ENCODE measurements at regions of chr1 and their contacts with region 1.

Region 1: GRCh38 chr1:67174716-67175284 is 8.5 kb downstream of the IL23R start:
- DNase-seq: no peak
- ATAC-seq: no peak
- H3K4me3 ChIP-seq: no peak overlapping the region
- H3K4me3 Mint-ChIP-seq: peak overlapping the region in 1 of 10 donors; percentile 15
- H3K27ac ChIP-seq: no peak overlapping the region
- H3K27ac Mint-ChIP-seq: peak overlapping the region in 1 of 9 donors; percentile 60
- H3K4me1 ChIP-seq: peaks cover 29 to 32% of the 10 kb centered on the region in 2 donors
- H3K4me1 Mint-ChIP-seq: peaks cover 43 to 66% (median 53%) of the 10 kb centered on the region in 7 donors
- H3K27me3 ChIP-seq: no peaks in the 10 kb centered on the region
- H3K27me3 Mint-ChIP-seq: peaks cover 0 to 4% (median 0%) of the 10 kb centered on the region in 5 donors

Region 2: GRCh38 chr1:66929999-66930822 is 244.6 kb before region 1 on chr1:
- CTCF ChIA-PET with region 1: no interaction called
- POLR2A ChIA-PET with region 1: interaction called, 4 read pairs
- intact Hi-C with region 1: loop called in 1 of 2 experiments (anchors 2 kb)
- DNase-seq: peak; percentile 88 to 97 (median 92)
- ATAC-seq: peak; percentile 88
- H3K4me3 ChIP-seq: peak overlapping the region; percentile 69
- H3K4me3 Mint-ChIP-seq: peak overlapping the region; percentile 85 to 98 (median 92)
- H3K27ac ChIP-seq: peak overlapping the region; percentile 91
- H3K27ac Mint-ChIP-seq: peak overlapping the region; percentile 79 to 95 (median 90)
- H3K4me1 ChIP-seq: peaks cover 45 to 48% of the 10 kb centered on the region in 2 donors
- H3K4me1 Mint-ChIP-seq: peaks cover 38 to 88% (median 70%) of the 10 kb centered on the region in 7 donors
- H3K27me3 ChIP-seq: no peaks in the 10 kb centered on the region
- H3K27me3 Mint-ChIP-seq: no peaks in the 10 kb centered on the region

Region 3: DNA sequence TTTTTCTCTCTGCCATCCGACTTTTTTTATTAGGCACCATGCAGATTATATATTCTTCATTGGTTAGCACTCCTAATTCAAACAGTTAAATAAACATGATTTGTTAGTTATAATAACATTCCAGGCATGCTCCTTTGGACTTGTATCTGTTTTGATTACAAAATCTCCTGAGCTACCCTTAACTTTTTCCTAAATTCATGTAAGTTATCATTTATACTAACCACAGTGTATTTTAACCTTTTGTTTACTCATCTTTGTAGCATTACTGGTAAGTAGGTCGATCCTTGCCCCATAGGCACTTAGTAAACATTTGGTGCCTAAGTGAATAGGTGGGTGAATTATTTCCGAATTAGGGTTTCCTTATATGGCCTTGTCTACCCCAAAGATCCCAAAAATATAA is 206.2 kb before region 1 on chr1:
- CTCF ChIA-PET with region 1: no interaction called
- POLR2A ChIA-PET with region 1: interaction called, 10 read pairs
- intact Hi-C with region 1: no loop called
- DNase-seq: no peak
- ATAC-seq: no peak
- H3K4me3 ChIP-seq: no peak overlapping the region
- H3K4me3 Mint-ChIP-seq: no peak overlapping the region
- H3K27ac ChIP-seq: no peak overlapping the region
- H3K27ac Mint-ChIP-seq: peak overlapping the region in 7 of 9 donors; percentile 10 to 91 (median 59)
- H3K4me1 ChIP-seq: no peaks in the 10 kb centered on the region
- H3K4me1 Mint-ChIP-seq: peaks cover 12 to 44% (median 31%) of the 10 kb centered on the region in 7 donors
- H3K27me3 ChIP-seq: no peaks in the 10 kb centered on the region
- H3K27me3 Mint-ChIP-seq: no peaks in the 10 kb centered on the region

Region 4: GRCh38 chr1:67162957-67163356 is 11.8 kb before region 1 on chr1:
- CTCF ChIA-PET with region 1: no interaction called
- POLR2A ChIA-PET with region 1: no interaction called
- intact Hi-C with region 1: loop called in 1 of 2 experiments (anchors 1 kb)
- DNase-seq: peak in 1 of 9 donors; percentile 43
- ATAC-seq: no peak
- H3K4me3 ChIP-seq: no peak overlapping the region
- H3K4me3 Mint-ChIP-seq: peak overlapping the region in 1 of 10 donors; percentile 45
- H3K27ac ChIP-seq: no peak overlapping the region
- H3K27ac Mint-ChIP-seq: peak overlapping the region in 1 of 9 donors; percentile 83
- H3K4me1 ChIP-seq: no peaks in the 10 kb centered on the region
- H3K4me1 Mint-ChIP-seq: peaks cover 7 to 46% (median 10%) of the 10 kb centered on the region in 7 donors
- H3K27me3 ChIP-seq: no peaks in the 10 kb centered on the region
- H3K27me3 Mint-ChIP-seq: peaks cover 0 to 17% (median 5%) of the 10 kb centered on the region in 5 donors

Region 5: GRCh38 chr1:67194209-67194863 is 19.5 kb after region 1 on chr1:
- CTCF ChIA-PET with region 1: no interaction called
- POLR2A ChIA-PET with region 1: interaction called, 3 read pairs
- intact Hi-C with region 1: loop called (anchors 1 to 2 kb)
- DNase-seq: peak in 4 of 9 donors; percentile 19 to 49 (median 31)
- ATAC-seq: peak; percentile 73
- H3K4me3 ChIP-seq: no peak overlapping the region
- H3K4me3 Mint-ChIP-seq: peak overlapping the region in 2 of 10 donors; percentile 15 to 17
- H3K27ac ChIP-seq: no peak overlapping the region
- H3K27ac Mint-ChIP-seq: peak overlapping the region in 1 of 9 donors; percentile 75
- H3K4me1 ChIP-seq: peaks cover 4 to 20% of the 10 kb centered on the region in 2 donors
- H3K4me1 Mint-ChIP-seq: peaks cover 4 to 30% (median 12%) of the 10 kb centered on the region in 7 donors
- H3K27me3 ChIP-seq: no peaks in the 10 kb centered on the region
- H3K27me3 Mint-ChIP-seq: peaks cover 0 to 3% (median 0%) of the 10 kb centered on the region in 5 donors

Region 6: DNA sequence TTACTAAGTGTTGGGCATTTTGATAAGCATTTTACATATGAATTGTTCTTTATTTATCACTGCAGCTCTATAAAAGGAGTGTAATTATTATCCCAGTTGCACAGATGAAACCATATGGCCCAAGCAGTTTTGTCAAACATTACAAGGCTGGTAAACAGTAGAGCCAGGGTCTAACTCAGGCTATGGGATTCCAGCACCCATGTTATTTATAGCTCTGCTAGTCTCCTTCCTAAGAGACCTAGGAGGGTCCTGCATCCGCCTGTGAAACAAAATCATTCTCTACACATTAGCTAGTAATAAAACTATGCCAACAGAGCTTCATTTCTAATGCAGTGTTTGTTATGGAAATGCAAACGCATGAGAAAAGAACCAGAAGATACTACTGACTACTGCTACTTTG is 50.1 kb after region 1 on chr1:
- CTCF ChIA-PET with region 1: no interaction called
- POLR2A ChIA-PET with region 1: no interaction called
- intact Hi-C with region 1: no loop called
- DNase-seq: no peak
- ATAC-seq: no peak
- H3K4me3 ChIP-seq: no peak overlapping the region
- H3K4me3 Mint-ChIP-seq: no peak overlapping the region
- H3K27ac ChIP-seq: no peak overlapping the region
- H3K27ac Mint-ChIP-seq: no peak overlapping the region
- H3K4me1 ChIP-seq: no peaks in the 10 kb centered on the region
- H3K4me1 Mint-ChIP-seq: peaks cover 0 to 8% (median 2%) of the 10 kb centered on the region in 7 donors
- H3K27me3 ChIP-seq: no peaks in the 10 kb centered on the region
- H3K27me3 Mint-ChIP-seq: peaks cover 0 to 7% (median 0%) of the 10 kb centered on the region in 5 donors

Region 7: DNA sequence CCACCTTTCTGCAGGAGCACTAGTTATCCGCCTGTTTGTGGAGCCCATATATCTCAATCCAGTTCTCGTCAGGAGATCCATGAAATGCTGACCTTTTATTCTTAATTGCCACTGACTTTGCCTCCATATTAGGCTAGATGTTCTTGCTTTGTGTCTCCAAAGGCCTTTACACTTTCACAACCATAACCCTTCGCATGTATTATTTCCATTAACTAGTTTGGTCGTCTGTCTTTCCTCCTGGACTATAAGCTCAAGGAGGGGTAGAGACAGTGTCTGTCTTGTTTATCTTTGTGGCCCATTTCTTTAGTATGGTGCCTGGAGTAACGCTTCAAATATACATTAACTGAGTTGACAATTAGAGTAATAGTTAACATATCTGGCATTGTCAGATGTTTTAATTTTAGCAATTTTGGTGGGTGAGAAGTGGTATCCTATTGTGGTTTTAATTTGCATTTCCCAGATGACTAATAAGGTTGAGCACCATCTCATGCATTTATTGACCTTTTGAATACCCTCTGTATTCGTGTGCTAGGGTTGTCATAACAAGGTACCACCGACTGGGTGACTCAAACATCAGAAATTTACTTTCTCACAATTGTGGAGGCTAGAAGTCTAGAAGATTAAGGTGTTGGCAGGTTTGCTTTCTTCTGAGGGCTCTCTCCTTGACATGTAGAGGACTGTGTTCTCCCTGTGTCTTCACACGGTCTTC is 111.1 kb after region 1 on chr1:
- CTCF ChIA-PET with region 1: no interaction called
- POLR2A ChIA-PET with region 1: no interaction called
- intact Hi-C with region 1: no loop called
- DNase-seq: no peak
- ATAC-seq: no peak
- H3K4me3 ChIP-seq: no peak overlapping the region
- H3K4me3 Mint-ChIP-seq: no peak overlapping the region
- H3K27ac ChIP-seq: no peak overlapping the region
- H3K27ac Mint-ChIP-seq: peak overlapping the region in 1 of 9 donors; percentile 24
- H3K4me1 ChIP-seq: no peaks in the 10 kb centered on the region
- H3K4me1 Mint-ChIP-seq: peaks cover 0 to 38% (median 0%) of the 10 kb centered on the region in 7 donors
- H3K27me3 ChIP-seq: no peaks in the 10 kb centered on the region
- H3K27me3 Mint-ChIP-seq: peaks cover 0 to 3% (median 0%) of the 10 kb centered on the region in 5 donors

Region 8: DNA sequence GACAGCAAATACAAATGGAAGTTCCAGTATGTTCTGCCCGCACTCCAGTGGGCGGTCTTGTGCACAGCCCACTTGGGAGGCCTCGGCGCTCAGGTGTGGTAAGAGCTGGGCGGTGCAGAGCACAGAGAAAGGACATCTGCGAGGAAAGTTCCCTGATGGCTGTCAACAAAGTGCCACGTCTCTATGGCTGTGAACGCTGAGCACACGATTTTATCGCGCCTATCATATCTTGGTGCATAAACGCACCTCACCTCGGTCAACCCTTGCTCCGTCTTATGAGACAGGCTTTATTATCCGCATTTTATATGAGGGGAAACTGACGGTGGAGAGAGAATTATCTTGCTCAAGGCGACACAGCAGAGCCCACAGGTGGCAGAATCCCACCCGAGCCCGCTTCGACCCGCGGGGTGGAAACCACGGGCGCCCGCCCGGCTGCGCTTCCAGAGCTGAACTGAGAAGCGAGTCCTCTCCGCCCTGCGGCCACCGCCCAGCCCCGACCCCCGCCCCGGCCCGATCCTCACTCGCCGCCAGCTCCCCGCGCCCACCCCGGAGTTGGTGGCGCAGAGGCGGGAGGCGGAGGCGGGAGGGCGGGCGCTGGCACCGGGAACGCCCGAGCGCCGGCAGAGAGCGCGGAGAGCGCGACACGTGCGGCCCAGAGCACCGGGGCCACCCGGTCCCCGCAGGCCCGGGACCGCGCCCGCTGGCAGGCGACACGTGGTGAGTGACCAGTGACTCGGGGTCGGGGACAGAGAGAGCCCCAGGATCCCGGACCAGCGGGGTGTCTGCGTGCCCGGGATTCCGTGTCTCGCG is 132.7 kb after region 1 on chr1 and contains the start of gene IL12RB2:
- CTCF ChIA-PET with region 1: no interaction called
- POLR2A ChIA-PET with region 1: no interaction called
- intact Hi-C with region 1: loop called in 1 of 2 experiments (anchors 5 kb)
- DNase-seq: peak in 7 of 9 donors; percentile 11 to 68 (median 18)
- ATAC-seq: peak; percentile 78
- H3K4me3 ChIP-seq: peak within 1 kb of the TSS; percentile 19
- H3K4me3 Mint-ChIP-seq: peak within 1 kb of the TSS; percentile 76 to 99 (median 84)
- H3K27ac ChIP-seq: no peak within 1 kb of the TSS
- H3K27ac Mint-ChIP-seq: peak within 1 kb of the TSS in 2 of 9 donors; percentile 56 to 99
- H3K4me1 ChIP-seq: peaks cover 0 to 5% of the 10 kb centered on the region in 2 donors
- H3K4me1 Mint-ChIP-seq: peaks cover 0 to 78% (median 9%) of the 10 kb centered on the region in 7 donors
- H3K27me3 ChIP-seq: no peaks in the 10 kb centered on the region
- H3K27me3 Mint-ChIP-seq: peaks cover 0 to 22% (median 10%) of the 10 kb centered on the region in 5 donors
- total RNA-seq, gene IL12RB2: 0.38 to 78.1 (median 1.1) TPM

Region 9: GRCh38 chr1:67332653-67333529 is 158.1 kb after region 1 on chr1:
- CTCF ChIA-PET with region 1: no interaction called
- POLR2A ChIA-PET with region 1: no interaction called
- intact Hi-C with region 1: loop called in 1 of 2 experiments (anchors 2 kb)
- DNase-seq: peak in 5 of 9 donors; percentile 16 to 41 (median 33)
- ATAC-seq: peak; percentile 84
- H3K4me3 ChIP-seq: no peak overlapping the region
- H3K4me3 Mint-ChIP-seq: peak overlapping the region in 6 of 10 donors; percentile 0 to 51 (median 24)
- H3K27ac ChIP-seq: no peak overlapping the region
- H3K27ac Mint-ChIP-seq: peak overlapping the region; percentile 3 to 87 (median 23)
- H3K4me1 ChIP-seq: peaks cover 17 to 34% of the 10 kb centered on the region in 2 donors
- H3K4me1 Mint-ChIP-seq: peaks cover 19 to 73% (median 39%) of the 10 kb centered on the region in 7 donors
- H3K27me3 ChIP-seq: no peaks in the 10 kb centered on the region
- H3K27me3 Mint-ChIP-seq: no peaks in the 10 kb centered on the region

Measured in naive thymus-derived CD4-positive, alpha-beta T cell (primary cell).